Naive thymus-derived CD8-positive, alpha-beta T cell (primary cell): ENCODE measurements at regions of chr16 and their contacts with region 1.

Region 1: DNA sequence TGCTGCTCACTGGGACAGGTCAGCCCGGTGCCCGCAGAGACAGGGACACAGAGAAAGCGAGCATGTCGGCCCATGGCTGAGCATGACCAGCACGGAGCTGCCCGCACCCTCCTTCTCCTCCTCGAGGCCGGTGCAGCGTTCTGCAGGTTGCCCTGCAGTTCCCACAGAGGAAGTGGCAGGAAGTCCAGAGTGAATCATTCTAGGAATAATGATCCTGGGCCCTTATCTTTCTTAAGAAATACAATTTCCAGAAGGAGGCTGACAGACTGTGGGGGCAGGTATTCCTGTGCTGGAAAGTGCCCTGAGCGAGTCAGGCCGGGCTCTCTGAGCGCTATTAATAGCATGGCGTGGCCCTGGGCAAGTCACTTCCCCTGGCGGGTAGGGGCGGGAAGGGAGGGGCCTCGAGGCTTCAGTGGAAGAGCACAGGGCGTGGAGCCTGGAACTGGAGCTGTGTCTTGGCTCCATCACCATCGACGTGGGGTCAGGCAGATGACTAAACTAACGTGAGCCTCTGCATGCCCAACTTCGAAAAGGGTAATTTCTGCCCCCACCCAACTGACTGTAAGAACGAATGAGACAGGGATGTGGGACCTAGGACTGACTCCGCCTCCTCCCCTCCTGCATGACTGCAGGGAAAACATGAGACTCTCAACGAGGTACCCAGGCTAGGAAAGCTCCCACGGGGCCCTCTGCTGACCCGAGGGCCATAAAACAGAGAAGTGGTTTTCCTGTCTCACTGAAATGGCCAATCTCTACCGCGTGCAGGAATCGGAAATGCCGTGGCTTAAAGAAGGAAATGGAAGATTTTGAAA is 9.8 kb downstream of the TMEM204 start:
- DNase-seq: peak in 2 of 10 donors; percentile 26 to 28
- ATAC-seq: peak; percentile 65 to 66
- H3K4me3 Mint-ChIP-seq: peak overlapping the region; percentile 59 to 84 (median 75)
- H3K27ac Mint-ChIP-seq: peak overlapping the region; percentile 47 to 92 (median 90)
- H3K4me1 Mint-ChIP-seq: peaks cover 29 to 96% (median 85%) of the 10 kb centered on the region in 4 donors
- H3K27me3 Mint-ChIP-seq: no peaks in the 10 kb centered on the region

Region 2: DNA sequence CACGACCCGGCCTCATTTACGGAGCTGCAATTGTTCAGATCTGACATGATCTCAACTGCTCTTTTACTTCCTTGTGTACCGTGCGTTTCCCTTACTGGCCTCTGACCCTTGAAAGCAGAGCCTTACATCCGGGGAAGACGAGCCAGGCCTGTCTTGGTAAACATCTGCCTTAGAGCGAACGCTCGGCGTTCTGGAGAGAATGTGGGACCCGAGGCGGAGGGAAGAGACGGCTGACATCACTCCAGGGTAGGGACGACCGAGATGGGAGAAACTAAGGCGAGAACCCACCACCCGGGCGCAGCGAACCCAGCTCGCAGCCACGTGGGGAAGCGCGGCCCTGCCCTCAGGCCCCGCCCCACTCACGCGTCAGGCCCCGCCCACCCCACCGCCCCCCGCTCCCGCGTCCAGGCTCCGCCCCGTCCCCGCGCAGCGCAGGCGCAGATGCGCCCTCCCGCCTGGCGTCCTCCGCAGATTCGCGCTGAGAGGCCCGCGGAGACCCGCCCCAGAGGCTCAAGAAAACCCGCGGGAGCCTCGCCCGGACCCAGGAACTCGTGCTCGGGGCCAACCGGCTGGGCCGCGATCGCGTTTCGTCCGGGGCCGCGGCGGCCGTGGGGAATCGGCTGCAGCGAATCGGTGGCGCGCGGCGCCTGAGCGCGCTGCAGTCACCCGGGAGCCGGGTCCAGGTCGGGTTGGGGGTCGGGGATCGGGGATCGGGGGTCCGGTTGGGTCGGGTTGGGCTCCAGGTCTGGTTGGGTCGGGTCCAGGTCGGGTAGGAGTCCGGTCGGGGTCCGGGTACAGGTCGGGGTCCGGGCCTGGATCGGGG is 50.2 kb before region 1 on chr16 and contains the start of gene TELO2:
- POLR2A ChIA-PET with region 1: interaction called, 15 read pairs
- DNase-seq: peak; percentile 76 to 96 (median 90)
- ATAC-seq: peak; percentile 88
- H3K4me3 Mint-ChIP-seq: peak within 1 kb of the TSS; percentile 91 to 99 (median 97)
- H3K27ac Mint-ChIP-seq: peak within 1 kb of the TSS; percentile 97 to 100 (median 100)
- H3K4me1 Mint-ChIP-seq: peaks cover 2 to 33% (median 15%) of the 10 kb centered on the region in 4 donors
- H3K27me3 Mint-ChIP-seq: no peaks in the 10 kb centered on the region
- polyA plus RNA-seq, gene TELO2: 9.8 to 18.1 (median 14.9) TPM

Region 3: GRCh38 chr16:1527836-1528811 is 15.2 kb before region 1 on chr16:
- POLR2A ChIA-PET with region 1: interaction called, 135 read pairs
- DNase-seq: no peak
- ATAC-seq: no peak
- H3K4me3 Mint-ChIP-seq: peak overlapping the region in 7 of 10 donors; percentile 52 to 88 (median 79)
- H3K27ac Mint-ChIP-seq: peak overlapping the region; percentile 72 to 94 (median 85)
- H3K4me1 Mint-ChIP-seq: peaks cover 11 to 52% (median 35%) of the 10 kb centered on the region in 4 donors
- H3K27me3 Mint-ChIP-seq: no peaks in the 10 kb centered on the region

Region 4: DNA sequence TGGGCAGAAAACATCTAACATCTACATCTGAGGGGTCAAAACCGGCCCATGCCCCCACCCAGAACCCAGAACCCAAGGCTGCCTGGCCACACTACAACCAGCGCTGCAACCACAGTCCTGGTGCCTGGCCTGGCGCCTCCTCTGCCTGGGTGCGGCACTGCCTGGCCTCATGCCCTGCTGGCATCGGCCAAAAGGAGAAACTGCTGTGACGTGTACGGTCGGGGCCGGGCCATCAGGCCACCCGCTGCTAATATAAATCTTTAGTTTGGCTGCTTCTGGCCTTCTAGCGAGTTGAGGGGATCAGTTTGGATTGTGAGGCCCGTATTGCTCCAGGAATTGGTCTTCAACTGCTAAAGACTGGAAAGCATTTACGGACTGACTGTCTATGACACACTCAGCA is 13.0 kb after region 1 on chr16:
- POLR2A ChIA-PET with region 1: interaction called, 135 read pairs
- DNase-seq: no peak
- ATAC-seq: no peak
- H3K4me3 Mint-ChIP-seq: no peak overlapping the region
- H3K27ac Mint-ChIP-seq: peak overlapping the region in 3 of 10 donors; percentile 20 to 55 (median 51)
- H3K4me1 Mint-ChIP-seq: peaks cover 24 to 56% (median 46%) of the 10 kb centered on the region in 4 donors
- H3K27me3 Mint-ChIP-seq: no peaks in the 10 kb centered on the region

Region 5: DNA sequence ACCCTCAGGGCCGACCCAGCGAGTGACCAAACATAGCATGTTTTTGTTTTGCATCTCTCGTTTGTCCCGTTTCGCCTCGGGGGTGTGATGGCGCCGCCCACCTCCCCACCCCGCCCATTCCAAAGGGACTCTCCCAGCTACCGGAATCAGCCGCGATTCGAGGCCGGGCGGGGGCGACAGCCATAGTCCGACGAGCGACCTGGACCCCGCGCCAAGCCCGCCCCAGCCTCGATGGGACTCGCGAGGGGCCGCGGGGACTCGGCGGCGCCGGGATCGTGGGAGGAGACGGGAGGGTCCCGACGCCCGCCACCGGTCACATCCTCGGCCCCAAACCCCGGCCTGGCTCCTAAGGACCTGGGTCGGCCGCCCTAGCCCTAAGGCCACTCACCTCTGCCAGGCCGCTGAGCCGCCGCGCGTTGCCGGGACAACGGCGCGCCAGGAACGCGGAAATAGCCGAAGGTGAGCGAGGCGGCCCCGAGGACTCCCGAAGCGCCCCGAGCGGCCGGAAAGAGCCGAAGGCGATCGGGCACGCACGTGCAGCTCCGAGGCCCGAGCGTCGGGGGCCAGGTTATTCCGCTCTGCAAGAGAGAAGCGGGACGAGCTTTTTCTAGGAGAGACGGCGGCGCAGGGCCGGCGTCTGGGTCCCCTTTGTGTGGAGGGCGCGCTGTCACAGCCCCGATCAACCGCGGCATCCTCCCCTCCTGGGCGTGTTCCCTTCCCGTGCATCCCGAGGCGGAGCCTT is 67.2 kb after region 1 on chr16:
- POLR2A ChIA-PET with region 1: interaction called, 25 read pairs
- DNase-seq: peak; percentile 86 to 93 (median 92)
- ATAC-seq: peak; percentile 60 to 67
- H3K4me3 Mint-ChIP-seq: peak overlapping the region; percentile 74 to 94 (median 83)
- H3K27ac Mint-ChIP-seq: peak overlapping the region; percentile 59 to 99 (median 82)
- H3K4me1 Mint-ChIP-seq: peaks cover 19 to 42% (median 35%) of the 10 kb centered on the region in 4 donors
- H3K27me3 Mint-ChIP-seq: peaks cover 0 to 10% (median 0%) of the 10 kb centered on the region in 5 donors